PC-9 (cell line): ENCODE measurements at regions of chr1 and their contacts with region 1.

Region 1: GRCh38 chr1:26602378-26602959 is 72.9 kb downstream of the RPS6KA1 start:
- DNase-seq: peak; percentile 41 to 54
- H3K4me3 ChIP-seq: no peak overlapping the region
- H3K27ac ChIP-seq: no peak overlapping the region
- H3K4me1 ChIP-seq: no peaks in the 10 kb centered on the region
- H3K27me3 ChIP-seq: no peaks in the 10 kb centered on the region
- CTCF ChIP-seq: peak; percentile 80

Region 2: DNA sequence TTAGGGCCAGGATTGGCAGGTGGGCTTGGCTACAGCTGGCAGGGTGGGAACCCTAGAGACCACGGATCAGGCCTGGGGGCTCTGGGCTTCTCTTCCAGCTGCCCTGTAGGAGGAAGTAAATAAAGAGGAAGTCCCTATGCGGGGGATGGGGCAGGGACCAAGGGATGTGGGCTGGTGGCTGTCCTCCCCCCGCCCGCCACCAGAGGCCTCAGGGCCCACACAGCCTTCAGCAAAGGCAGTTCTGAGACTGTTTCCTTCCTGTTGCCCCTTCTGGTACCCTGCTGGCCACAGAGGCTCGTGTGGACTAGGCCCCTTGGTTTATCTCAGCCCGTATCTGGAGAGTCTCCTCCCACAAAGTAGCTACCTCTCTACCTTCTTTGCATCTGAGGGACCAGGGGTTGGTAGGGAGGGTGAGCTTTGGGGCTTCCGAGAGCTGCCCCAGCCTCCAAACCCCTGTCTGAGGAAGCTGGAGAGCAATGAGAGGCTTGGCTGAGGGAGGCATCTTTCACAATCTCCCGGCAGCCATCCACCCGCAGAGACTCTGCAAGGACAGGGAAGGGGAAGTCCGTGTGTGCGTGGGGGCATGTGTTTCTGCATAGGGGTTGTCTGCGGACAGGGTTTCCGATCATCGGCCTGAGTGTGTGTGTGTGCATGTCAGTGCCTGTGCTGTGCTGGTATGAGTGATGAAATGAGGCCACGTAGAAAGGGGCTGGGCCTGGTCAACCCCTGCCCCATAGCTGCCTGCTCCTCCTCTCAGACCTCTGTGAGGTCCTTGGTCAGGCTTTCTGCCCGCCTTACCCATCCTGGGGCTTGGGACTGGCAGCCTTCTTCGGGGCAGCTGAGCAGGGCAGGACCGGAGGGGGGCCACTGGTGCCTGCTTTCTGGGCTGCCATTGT is 60.4 kb before region 1 on chr1:
- CTCF ChIA-PET with region 1: no interaction called
- POLR2A ChIA-PET with region 1: no interaction called
- intact Hi-C with region 1: no loop called
- DNase-seq: peak in 1 of 2 experiments; percentile 8
- H3K4me3 ChIP-seq: no peak overlapping the region
- H3K27ac ChIP-seq: no peak overlapping the region
- H3K4me1 ChIP-seq: peaks cover 8% of the 10 kb centered on the region
- H3K27me3 ChIP-seq: no peaks in the 10 kb centered on the region
- CTCF ChIP-seq: no peak

Region 3: GRCh38 chr1:26553942-26554682 is 48.4 kb before region 1 on chr1:
- CTCF ChIA-PET with region 1: interaction called, 18 read pairs
- POLR2A ChIA-PET with region 1: no interaction called
- intact Hi-C with region 1: no loop called
- DNase-seq: no peak
- H3K4me3 ChIP-seq: no peak overlapping the region
- H3K27ac ChIP-seq: no peak overlapping the region
- H3K4me1 ChIP-seq: no peaks in the 10 kb centered on the region
- H3K27me3 ChIP-seq: no peaks in the 10 kb centered on the region
- CTCF ChIP-seq: no peak

Region 4: DNA sequence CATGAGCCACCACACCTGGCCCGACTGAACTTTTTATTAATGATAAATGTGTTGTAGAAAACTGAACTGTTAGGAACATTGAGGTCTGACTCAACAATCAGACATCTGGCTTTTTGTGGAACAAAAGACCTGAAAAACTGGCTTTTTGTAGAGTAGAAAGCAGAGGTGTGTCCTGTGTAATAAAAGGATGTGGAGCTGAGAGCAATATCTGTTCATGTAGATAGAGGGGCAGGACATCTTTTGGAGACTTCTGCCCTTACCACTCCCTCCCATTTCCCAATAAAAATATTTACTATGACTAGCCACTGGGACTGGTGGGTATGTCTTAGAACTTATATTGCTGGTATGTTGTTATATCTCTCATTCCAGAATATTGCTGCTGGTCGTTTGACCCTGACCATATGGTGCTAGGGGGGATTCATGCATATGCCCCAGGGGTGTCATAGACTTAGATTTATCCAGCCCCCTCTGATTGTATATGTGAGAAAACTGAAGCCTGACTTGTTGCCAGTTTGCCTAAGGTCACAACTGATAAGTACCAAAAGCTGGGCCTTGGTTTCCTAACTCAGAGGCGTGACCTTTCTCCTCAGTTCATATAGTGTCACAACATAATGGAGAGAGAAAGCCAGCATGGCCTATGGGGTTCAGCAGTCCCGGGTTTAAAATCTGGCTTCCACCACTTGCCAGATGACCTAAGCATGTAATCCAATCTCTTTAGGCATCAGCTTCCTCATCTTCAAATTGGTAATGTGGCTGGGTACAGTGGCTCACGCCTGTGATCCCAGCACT is 151.8 kb after region 1 on chr1:
- CTCF ChIA-PET with region 1: interaction called, 24 read pairs
- POLR2A ChIA-PET with region 1: no interaction called
- intact Hi-C with region 1: no loop called
- DNase-seq: peak; percentile 41 to 93
- H3K4me3 ChIP-seq: peak overlapping the region; percentile 31; the same call in 1 of the 2 replicates
- H3K27ac ChIP-seq: peak overlapping the region; percentile 84
- H3K4me1 ChIP-seq: peaks cover 45% of the 10 kb centered on the region
- H3K27me3 ChIP-seq: no peaks in the 10 kb centered on the region
- CTCF ChIP-seq: no peak

Region 5: DNA sequence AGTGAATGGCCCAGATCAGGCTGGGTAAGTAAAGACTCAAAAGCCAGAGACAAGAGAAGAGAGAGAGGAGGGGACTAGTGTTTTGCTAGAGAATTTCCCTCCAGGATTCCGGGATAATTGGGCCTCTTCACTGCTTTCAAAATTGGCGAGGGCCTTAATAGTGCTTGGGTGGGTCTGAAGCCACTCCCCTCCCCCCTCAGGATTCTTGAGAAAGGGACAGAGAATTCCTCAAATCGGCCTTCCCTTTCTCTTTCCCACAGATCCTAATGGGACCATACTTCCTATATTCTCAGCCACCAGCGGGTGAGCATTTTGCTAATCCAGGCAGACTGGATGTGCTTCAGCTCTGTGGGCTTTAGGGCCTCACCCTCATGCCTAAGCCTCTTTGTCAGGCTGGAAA is 272.4 kb after region 1 on chr1:
- CTCF ChIA-PET with region 1: no interaction called
- POLR2A ChIA-PET with region 1: no interaction called
- intact Hi-C with region 1: loop called (anchors 1 kb)
- DNase-seq: no peak
- H3K4me3 ChIP-seq: no peak overlapping the region
- H3K27ac ChIP-seq: peak overlapping the region; percentile 28
- H3K4me1 ChIP-seq: peaks cover 43% of the 10 kb centered on the region
- H3K27me3 ChIP-seq: no peaks in the 10 kb centered on the region
- CTCF ChIP-seq: no peak